Heart right ventricle (tissue), 16 donors: ENCODE measurements at regions of chr3 and their contacts with region 1.

Region 1: GRCh38 chr3:112642912-112643506 is 2.1 kb upstream of the CCDC80 start:
- DNase-seq: peak; percentile 69 to 87
- ATAC-seq: peak; percentile 85 to 91 (median 88)
- H3K4me3 ChIP-seq: peak overlapping the region in 5 of 10 donors; percentile 16 to 43 (median 21)
- H3K27ac ChIP-seq: peak overlapping the region in 5 of 10 donors; percentile 49 to 90 (median 68)
- H3K4me1 ChIP-seq: peaks cover 0 to 37% (median 25%) of the 10 kb centered on the region in 9 donors
- H3K27me3 ChIP-seq: peaks cover 0 to 19% (median 9%) of the 10 kb centered on the region in 7 donors
- CTCF ChIP-seq: peak; percentile 39 to 89 (median 79)

Region 2: GRCh38 chr3:112425858-112426750 is 216.9 kb before region 1 on chr3:
- intact Hi-C with region 1: no loop called
- DNase-seq: no peak
- ATAC-seq: no peak
- H3K4me3 ChIP-seq: no peak overlapping the region
- H3K27ac ChIP-seq: no peak overlapping the region
- H3K4me1 ChIP-seq: no peaks in the 10 kb centered on the region
- H3K27me3 ChIP-seq: no peaks in the 10 kb centered on the region
- CTCF ChIP-seq: no peak

Region 3: GRCh38 chr3:112734718-112735350 is 91.8 kb after region 1 on chr3:
- intact Hi-C with region 1: loop called in 2 of 10 experiments (anchors 5 to 10 kb)
- DNase-seq: peak in 1 of 2 donors; percentile 62
- ATAC-seq: peak in 6 of 8 donors; percentile 46 to 75 (median 72)
- H3K4me3 ChIP-seq: no peak overlapping the region
- H3K27ac ChIP-seq: no peak overlapping the region
- H3K4me1 ChIP-seq: peaks cover 0 to 27% (median 0%) of the 10 kb centered on the region in 9 donors
- H3K27me3 ChIP-seq: peaks cover 0 to 6% (median 0%) of the 10 kb centered on the region in 7 donors
- CTCF ChIP-seq: peak; percentile 32 to 78 (median 65)

Region 4: DNA sequence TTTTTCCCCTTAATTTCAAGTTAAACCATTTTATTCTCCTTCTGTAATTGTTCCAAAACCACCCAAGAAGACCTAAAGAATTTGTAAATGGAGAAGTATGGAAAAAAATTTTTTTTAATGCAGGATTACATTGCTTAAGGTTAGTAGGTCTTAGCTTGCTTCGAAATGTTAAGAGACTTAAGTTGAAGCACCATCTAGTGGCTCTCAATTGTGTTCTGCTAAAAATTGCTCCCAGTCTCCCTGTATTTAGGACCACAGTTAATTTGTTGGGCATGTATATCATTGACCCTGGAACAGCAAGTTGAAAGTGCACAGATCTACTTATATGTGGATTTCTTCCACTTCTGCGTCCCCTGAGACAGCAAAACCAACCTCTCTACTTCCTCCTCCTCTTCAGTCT is 171.3 kb after region 1 on chr3:
- intact Hi-C with region 1: loop called in 8 of 10 experiments (anchors 1 to 5 kb)
- DNase-seq: no peak
- ATAC-seq: peak in 3 of 8 donors; percentile 32 to 45 (median 44)
- H3K4me3 ChIP-seq: no peak overlapping the region
- H3K27ac ChIP-seq: peak overlapping the region in 5 of 10 donors; percentile 30 to 82 (median 78)
- H3K4me1 ChIP-seq: peaks cover 0 to 65% (median 16%) of the 10 kb centered on the region in 9 donors
- H3K27me3 ChIP-seq: peaks cover 0 to 6% (median 0%) of the 10 kb centered on the region in 7 donors
- CTCF ChIP-seq: peak in 7 of 9 donors; percentile 30 to 62 (median 49)

Region 5: GRCh38 chr3:112979240-112979832 is 336.3 kb after region 1 on chr3:
- intact Hi-C with region 1: loop called (anchors 2 to 5 kb)
- DNase-seq: no peak
- ATAC-seq: no peak
- H3K4me3 ChIP-seq: no peak overlapping the region
- H3K27ac ChIP-seq: no peak overlapping the region
- H3K4me1 ChIP-seq: peaks cover 0 to 25% (median 0%) of the 10 kb centered on the region in 9 donors
- H3K27me3 ChIP-seq: no peaks in the 10 kb centered on the region
- CTCF ChIP-seq: peak; percentile 50 to 85 (median 74)

Region 6: GRCh38 chr3:113968986-113969385 is 1326.0 kb after region 1 on chr3:
- intact Hi-C with region 1: loop called in 1 of 10 experiments (anchors 10 kb)
- DNase-seq: no peak
- ATAC-seq: peak in 4 of 8 donors; percentile 24 to 71 (median 56)
- H3K4me3 ChIP-seq: no peak overlapping the region
- H3K27ac ChIP-seq: no peak overlapping the region
- H3K4me1 ChIP-seq: no peaks in the 10 kb centered on the region
- H3K27me3 ChIP-seq: no peaks in the 10 kb centered on the region
- CTCF ChIP-seq: no peak